HCT116 (cell line): ENCODE measurements at regions of chr16 and their contacts with region 1.

Region 1: GRCh38 chr16:14029658-14030057 is 41.5 kb upstream of the MRTFB start:
- DNase-seq: no peak
- ATAC-seq: no peak
- H3K4me3 ChIP-seq: no peak overlapping the region
- H3K27ac ChIP-seq: no peak overlapping the region
- H3K4me1 ChIP-seq: peaks cover 0 to 5% of the 10 kb centered on the region in 2 experiments; a peak in 1 of 4 replicates
- H3K27me3 ChIP-seq: no peaks in the 10 kb centered on the region
- CTCF ChIP-seq: no peak
- POLR2A ChIP-seq: no peak
- RAD21 ChIP-seq: no peak

Region 2: DNA sequence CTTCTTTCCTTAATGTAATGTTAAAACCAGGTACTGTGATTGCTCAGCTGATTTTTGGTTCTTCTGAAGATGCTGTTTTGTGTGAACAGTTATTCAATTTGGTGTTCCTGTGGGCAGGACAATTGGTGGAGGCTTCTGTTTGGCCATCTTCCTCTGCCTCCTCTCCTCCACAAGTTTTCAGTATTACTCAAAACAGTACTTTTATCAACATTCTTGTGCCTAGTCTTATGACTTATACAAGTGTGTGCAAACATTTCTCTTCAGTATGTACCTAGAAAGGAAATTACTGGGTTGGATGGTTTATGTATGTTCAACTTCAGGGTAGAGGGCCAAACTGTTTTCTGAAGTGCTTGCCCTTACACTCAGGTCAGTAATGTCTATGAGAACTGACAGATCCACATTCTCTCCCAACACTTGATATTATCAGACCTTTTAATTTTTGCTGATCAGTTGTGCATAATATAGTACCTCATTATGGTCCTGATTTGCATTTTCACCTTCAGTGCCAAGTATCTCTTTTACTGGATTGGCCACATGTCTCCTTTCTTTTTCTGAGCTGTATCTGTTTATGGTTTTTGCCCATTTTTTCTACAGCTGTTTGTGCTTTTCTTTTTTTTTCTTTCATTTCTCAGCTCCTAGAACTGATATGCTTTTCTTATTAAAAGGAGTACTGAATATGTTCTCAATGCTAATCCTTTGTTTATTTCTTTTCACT is 58.8 kb before region 1 on chr16:
- CTCF ChIA-PET with region 1: no interaction called
- POLR2A ChIA-PET with region 1: no interaction called
- RAD21 ChIA-PET with region 1: no interaction called
- intact Hi-C with region 1: loop called (anchors 10 kb)
- DNase-seq: no peak
- ATAC-seq: no peak
- H3K4me3 ChIP-seq: no peak overlapping the region
- H3K27ac ChIP-seq: no peak overlapping the region
- H3K4me1 ChIP-seq: no peaks in the 10 kb centered on the region
- H3K27me3 ChIP-seq: no peaks in the 10 kb centered on the region
- CTCF ChIP-seq: no peak
- POLR2A ChIP-seq: no peak
- RAD21 ChIP-seq: no peak